Activated CD4-positive, alpha-beta T cell treated with anti-CD3 and anti-CD28 coated beads, Interleukin-2, amount 10 ng/mL, durations not matched to agents 24 days and 14 days (primary cell): ENCODE measurements at regions of chr6 and their contacts with region 1.

Region 1: GRCh38 chr6:50655848-50656453 is 57.4 kb upstream of the TFAP2D start:
- DNase-seq: no peak
- H3K4me3 Mint-ChIP-seq: no peak overlapping the region
- H3K27ac Mint-ChIP-seq: no peak overlapping the region
- H3K4me1 Mint-ChIP-seq: no peaks in the 10 kb centered on the region
- H3K27me3 Mint-ChIP-seq: no peaks in the 10 kb centered on the region

Region 2: GRCh38 chr6:50318536-50318935 is 337.4 kb before region 1 on chr6:
- intact Hi-C with region 1: no loop called
- DNase-seq: no peak
- H3K4me3 Mint-ChIP-seq: no peak overlapping the region
- H3K27ac Mint-ChIP-seq: no peak overlapping the region
- H3K4me1 Mint-ChIP-seq: no peaks in the 10 kb centered on the region
- H3K27me3 Mint-ChIP-seq: no peaks in the 10 kb centered on the region

Region 3: DNA sequence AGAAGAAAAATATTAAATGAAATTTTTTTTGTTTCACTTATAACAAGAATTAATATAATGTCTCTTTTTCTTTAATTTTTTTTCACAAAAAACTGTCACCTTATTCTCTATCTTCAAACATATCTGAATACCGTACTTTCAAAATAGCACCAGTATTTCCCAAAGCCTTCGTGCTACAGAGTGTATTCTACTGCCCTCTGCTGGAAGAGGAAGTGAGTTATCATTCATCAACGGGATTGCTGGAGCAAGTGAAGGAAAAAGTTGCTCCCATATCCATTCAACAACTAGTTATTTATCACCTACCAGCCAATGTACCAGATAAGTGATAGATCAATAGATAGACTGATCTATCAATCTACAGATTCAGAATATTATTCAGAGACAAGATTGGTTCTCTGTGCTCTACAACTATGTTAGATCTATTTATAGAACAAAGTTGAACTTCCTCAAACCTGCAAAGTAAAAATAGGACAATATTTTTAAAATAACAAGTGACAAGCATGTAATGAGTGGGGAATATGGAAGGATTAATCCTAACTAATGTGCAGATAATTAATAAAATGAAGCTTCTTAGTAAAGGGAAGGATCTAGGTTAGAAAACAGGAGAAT is 136.1 kb after region 1 on chr6:
- intact Hi-C with region 1: loop called (anchors 2 kb)
- DNase-seq: peak; percentile 60
- H3K4me3 Mint-ChIP-seq: no peak overlapping the region
- H3K27ac Mint-ChIP-seq: no peak overlapping the region
- H3K4me1 Mint-ChIP-seq: no peaks in the 10 kb centered on the region
- H3K27me3 Mint-ChIP-seq: no peaks in the 10 kb centered on the region